Activated CD8-positive, alpha-beta T cell treated with anti-CD3 and anti-CD28 coated beads for 36 hours (primary cell): ENCODE measurements at regions of chr6 and their contacts with region 1.

Region 1: DNA sequence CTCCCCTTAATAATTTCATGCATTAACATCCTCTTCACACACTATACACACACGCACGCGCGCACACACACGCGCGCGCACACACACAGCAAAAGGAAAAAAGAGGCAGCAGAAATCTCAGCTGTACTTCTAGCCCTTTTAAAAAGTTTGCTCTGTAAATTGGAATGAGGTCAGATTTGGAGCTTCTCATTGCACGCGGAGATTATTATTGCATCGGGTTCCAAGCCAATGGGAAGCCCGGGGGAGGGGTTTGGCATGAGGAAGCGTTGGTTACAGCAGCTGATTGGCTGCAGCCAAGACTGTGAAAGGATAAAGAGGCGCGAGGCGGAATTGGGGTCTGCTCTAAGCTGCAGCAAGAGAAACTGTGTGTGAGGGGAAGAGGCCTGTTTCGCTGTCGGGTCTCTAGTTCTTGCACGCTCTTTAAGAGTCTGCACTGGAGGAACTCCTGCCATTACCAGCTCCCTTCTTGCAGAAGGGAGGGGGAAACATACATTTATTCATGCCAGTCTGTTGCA is at the start of gene SOX4:
- DNase-seq: peak; percentile 83
- ATAC-seq: peak; percentile 64
- H3K4me3 Mint-ChIP-seq: peak within 1 kb of the TSS; percentile 78
- H3K27ac Mint-ChIP-seq: peak within 1 kb of the TSS; percentile 79
- H3K4me1 Mint-ChIP-seq: peaks cover 28% of the 10 kb centered on the region
- H3K27me3 Mint-ChIP-seq: peaks cover 41% of the 10 kb centered on the region
- CTCF ChIP-seq: no peak
- total RNA-seq, gene SOX4: 1.6 TPM

Region 2: DNA sequence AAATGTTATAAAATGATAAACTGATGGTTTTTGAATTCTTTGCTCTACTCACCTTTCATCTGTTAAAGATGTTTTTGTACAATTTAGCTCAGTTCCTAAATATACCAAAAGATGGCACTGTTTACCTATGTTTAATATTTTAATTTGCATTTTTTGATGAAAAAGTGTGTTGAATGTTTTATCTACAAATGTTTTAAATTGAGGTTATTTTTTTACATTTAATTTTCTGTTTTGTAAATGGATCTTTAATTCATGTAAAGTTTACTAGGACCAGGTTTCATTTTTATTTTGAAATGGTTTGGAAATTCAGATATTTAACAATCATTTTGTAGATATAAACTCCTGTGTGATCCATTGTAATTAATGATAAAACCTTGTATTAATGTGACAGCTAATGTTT is 1029.2 kb before region 1 on chr6:
- CTCF ChIA-PET with region 1: interaction called, 37 read pairs
- POLR2A ChIA-PET with region 1: no interaction called
- intact Hi-C with region 1: loop called (anchors 5 kb)
- DNase-seq: no peak
- ATAC-seq: no peak
- H3K4me3 Mint-ChIP-seq: no peak overlapping the region
- H3K27ac Mint-ChIP-seq: no peak overlapping the region
- H3K4me1 Mint-ChIP-seq: peaks cover 14% of the 10 kb centered on the region
- H3K27me3 Mint-ChIP-seq: no peaks in the 10 kb centered on the region
- CTCF ChIP-seq: peak; percentile 68

Region 3: GRCh38 chr6:21438237-21438985 is 155.1 kb before region 1 on chr6:
- CTCF ChIA-PET with region 1: interaction called, 4 read pairs
- POLR2A ChIA-PET with region 1: no interaction called
- intact Hi-C with region 1: loop called (anchors 5 kb)
- DNase-seq: peak; percentile 82
- ATAC-seq: peak; percentile 95
- H3K4me3 Mint-ChIP-seq: peak overlapping the region; percentile 69
- H3K27ac Mint-ChIP-seq: peak overlapping the region; percentile 91
- H3K4me1 Mint-ChIP-seq: peaks cover 25% of the 10 kb centered on the region
- H3K27me3 Mint-ChIP-seq: peaks cover 9% of the 10 kb centered on the region
- CTCF ChIP-seq: no peak

Region 4: GRCh38 chr6:21664314-21665109 is 71.0 kb after region 1 on chr6:
- CTCF ChIA-PET with region 1: interaction called, 4 read pairs
- POLR2A ChIA-PET with region 1: no interaction called
- intact Hi-C with region 1: loop called (anchors 5 kb)
- DNase-seq: peak; percentile 36
- ATAC-seq: peak; percentile 45
- H3K4me3 Mint-ChIP-seq: peak overlapping the region; percentile 46
- H3K27ac Mint-ChIP-seq: no peak overlapping the region
- H3K4me1 Mint-ChIP-seq: peaks cover 28% of the 10 kb centered on the region
- H3K27me3 Mint-ChIP-seq: peaks cover 64% of the 10 kb centered on the region
- CTCF ChIP-seq: no peak